Calu3 (cell line): ENCODE measurements at regions of chr7 and their contacts with region 1.

Region 1: GRCh38 chr7:23431702-23432199 is 38.5 kb downstream of the IGF2BP3 start:
- DNase-seq: peak; percentile 24
- H3K4me3 Mint-ChIP-seq: peak overlapping the region; percentile 5
- H3K27ac Mint-ChIP-seq: peak overlapping the region; percentile 88
- H3K4me1 Mint-ChIP-seq: peaks cover 59% of the 10 kb centered on the region
- H3K27me3 Mint-ChIP-seq: no peaks in the 10 kb centered on the region
- CTCF ChIP-seq: no peak

Region 2: GRCh38 chr7:23445326-23445725 is 13.6 kb after region 1 on chr7:
- CTCF ChIA-PET with region 1: no interaction called
- intact Hi-C with region 1: loop called (anchors 1 kb)
- DNase-seq: no peak
- H3K4me3 Mint-ChIP-seq: no peak overlapping the region
- H3K27ac Mint-ChIP-seq: no peak overlapping the region
- H3K4me1 Mint-ChIP-seq: peaks cover 27% of the 10 kb centered on the region
- H3K27me3 Mint-ChIP-seq: no peaks in the 10 kb centered on the region
- CTCF ChIP-seq: no peak

Region 3: DNA sequence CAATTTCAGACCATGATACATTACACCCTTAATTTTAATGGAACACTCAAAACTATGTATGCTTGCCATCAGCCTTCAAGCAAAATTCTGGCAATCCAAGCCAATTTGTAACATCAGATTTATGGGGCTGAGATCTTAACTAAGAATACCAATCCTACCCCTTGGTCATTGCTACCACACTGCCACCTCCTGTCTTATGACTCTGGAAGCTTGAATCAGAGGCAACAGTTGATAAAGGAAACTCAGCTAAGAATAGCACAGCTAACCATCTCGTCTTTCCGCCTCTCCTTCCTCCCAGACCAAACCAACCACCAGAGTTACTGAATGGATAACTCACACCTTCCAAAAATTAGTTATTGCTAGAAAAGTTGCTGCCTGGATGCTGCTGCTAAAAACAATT is 31.1 kb after region 1 on chr7:
- CTCF ChIA-PET with region 1: interaction called, 19 read pairs
- intact Hi-C with region 1: loop called (anchors 1 kb)
- DNase-seq: peak; percentile 61
- H3K4me3 Mint-ChIP-seq: peak overlapping the region; percentile 69
- H3K27ac Mint-ChIP-seq: peak overlapping the region; percentile 55
- H3K4me1 Mint-ChIP-seq: peaks cover 70% of the 10 kb centered on the region
- H3K27me3 Mint-ChIP-seq: no peaks in the 10 kb centered on the region
- CTCF ChIP-seq: no peak

Region 4: GRCh38 chr7:23486002-23486775 is 54.4 kb after region 1 on chr7:
- CTCF ChIA-PET with region 1: no interaction called
- intact Hi-C with region 1: no loop called
- DNase-seq: no peak
- H3K4me3 Mint-ChIP-seq: no peak overlapping the region
- H3K27ac Mint-ChIP-seq: peak overlapping the region; percentile 11
- H3K4me1 Mint-ChIP-seq: peaks cover 9% of the 10 kb centered on the region
- H3K27me3 Mint-ChIP-seq: no peaks in the 10 kb centered on the region
- CTCF ChIP-seq: no peak

Region 5: GRCh38 chr7:23529262-23529859 is 97.6 kb after region 1 on chr7:
- CTCF ChIA-PET with region 1: no interaction called
- intact Hi-C with region 1: loop called (anchors 5 kb)
- DNase-seq: no peak
- H3K4me3 Mint-ChIP-seq: peak overlapping the region; percentile 79
- H3K27ac Mint-ChIP-seq: peak overlapping the region; percentile 93
- H3K4me1 Mint-ChIP-seq: peaks cover 58% of the 10 kb centered on the region
- H3K27me3 Mint-ChIP-seq: no peaks in the 10 kb centered on the region
- CTCF ChIP-seq: no peak

Region 6: DNA sequence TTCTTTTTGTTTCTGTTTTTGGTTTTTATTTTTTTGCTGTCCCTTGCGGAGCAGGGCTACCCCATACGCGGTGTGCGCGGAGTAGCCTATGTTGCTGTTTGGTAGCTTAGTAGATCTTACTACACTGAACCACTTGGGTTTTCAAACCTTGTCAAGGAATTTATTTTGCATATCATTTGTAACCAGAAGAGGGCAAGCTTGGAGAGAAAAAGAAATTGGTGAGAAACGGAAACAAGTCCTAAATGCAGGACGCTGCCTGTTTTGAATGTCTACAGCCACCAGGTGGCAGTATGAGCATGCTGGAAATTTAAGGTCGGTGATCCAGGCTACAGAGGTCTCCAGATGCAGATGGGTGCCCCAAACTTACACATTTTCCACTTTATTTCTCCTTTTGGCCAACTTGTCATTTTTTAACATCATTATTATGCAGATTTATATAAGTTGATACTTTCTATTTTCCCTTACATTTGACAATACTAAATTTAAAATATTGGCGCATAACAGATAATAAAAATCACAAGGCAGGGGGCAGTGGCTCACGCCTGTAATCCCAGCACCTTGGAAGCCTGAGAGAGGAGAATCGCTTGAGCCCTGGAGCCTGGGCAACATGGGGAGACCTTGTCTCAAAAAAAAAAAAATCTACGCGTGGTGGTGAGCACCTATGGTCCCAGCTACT is 115.3 kb after region 1 on chr7:
- CTCF ChIA-PET with region 1: interaction called, 14 read pairs
- intact Hi-C with region 1: loop called (anchors 1 kb)
- DNase-seq: peak; percentile 87
- H3K4me3 Mint-ChIP-seq: no peak overlapping the region
- H3K27ac Mint-ChIP-seq: no peak overlapping the region
- H3K4me1 Mint-ChIP-seq: peaks cover 16% of the 10 kb centered on the region
- H3K27me3 Mint-ChIP-seq: no peaks in the 10 kb centered on the region
- CTCF ChIP-seq: peak; percentile 98